Right ventricle myocardium superior (tissue), 1 donor: ENCODE measurements at regions of chr18 and their contacts with region 1.

Region 1: GRCh38 chr18:12038639-12039417 is 54.8 kb upstream of the ANKRD62 start:
- DNase-seq: peak; percentile 92
- ATAC-seq: peak; percentile 96

Region 2: GRCh38 chr18:11733031-11733430 is 305.8 kb before region 1 on chr18:
- intact Hi-C with region 1: loop called (anchors 10 kb)
- DNase-seq: peak; percentile 88
- ATAC-seq: peak; percentile 99

Region 3: GRCh38 chr18:11937874-11938478 is 100.9 kb before region 1 on chr18:
- intact Hi-C with region 1: loop called (anchors 5 kb)
- DNase-seq: peak; percentile 83
- ATAC-seq: peak; percentile 94